Activated CD8-positive, alpha-beta T cell treated with anti-CD3 and anti-CD28 coated beads, Interleukin-2, amount 10 ng/mL, durations not matched to agents 7 days and 5 days (primary cell): ENCODE measurements at regions of chr12 and their contacts with region 1.

Region 1: GRCh38 chr12:112937741-112938719 is at the start of gene OAS3:
- DNase-seq: peak; percentile 80
- ATAC-seq: peak; percentile 87
- H3K4me3 Mint-ChIP-seq: peak within 1 kb of the TSS; percentile 98
- H3K27ac Mint-ChIP-seq: peak within 1 kb of the TSS; percentile 95
- H3K4me1 Mint-ChIP-seq: peaks cover 40% of the 10 kb centered on the region
- H3K27me3 Mint-ChIP-seq: no peaks in the 10 kb centered on the region
- total RNA-seq, gene OAS3: 199 to 202 TPM

Region 2: GRCh38 chr12:112900299-112901145 is 37.5 kb before region 1 on chr12:
- CTCF ChIA-PET with region 1: interaction called, 15 read pairs
- POLR2A ChIA-PET with region 1: interaction called, 74 read pairs
- DNase-seq: peak; percentile 63
- ATAC-seq: peak; percentile 55
- H3K4me3 Mint-ChIP-seq: no peak overlapping the region
- H3K27ac Mint-ChIP-seq: no peak overlapping the region
- H3K4me1 Mint-ChIP-seq: peaks cover 37% of the 10 kb centered on the region
- H3K27me3 Mint-ChIP-seq: peaks cover 17% of the 10 kb centered on the region

Region 3: GRCh38 chr12:112906712-112907414 is 31.2 kb before region 1 on chr12 and contains the start of gene OAS1:
- CTCF ChIA-PET with region 1: interaction called, 15 read pairs
- POLR2A ChIA-PET with region 1: interaction called, 74 read pairs
- DNase-seq: peak; percentile 74
- ATAC-seq: peak; percentile 88
- H3K4me3 Mint-ChIP-seq: peak within 1 kb of the TSS; percentile 95
- H3K27ac Mint-ChIP-seq: peak within 1 kb of the TSS; percentile 95
- H3K4me1 Mint-ChIP-seq: peaks cover 68% of the 10 kb centered on the region
- H3K27me3 Mint-ChIP-seq: no peaks in the 10 kb centered on the region
- total RNA-seq, gene OAS1: 143 to 146 TPM